ENCODE measurements at regions of chr14 and their contacts with region 1.

Region 1: DNA sequence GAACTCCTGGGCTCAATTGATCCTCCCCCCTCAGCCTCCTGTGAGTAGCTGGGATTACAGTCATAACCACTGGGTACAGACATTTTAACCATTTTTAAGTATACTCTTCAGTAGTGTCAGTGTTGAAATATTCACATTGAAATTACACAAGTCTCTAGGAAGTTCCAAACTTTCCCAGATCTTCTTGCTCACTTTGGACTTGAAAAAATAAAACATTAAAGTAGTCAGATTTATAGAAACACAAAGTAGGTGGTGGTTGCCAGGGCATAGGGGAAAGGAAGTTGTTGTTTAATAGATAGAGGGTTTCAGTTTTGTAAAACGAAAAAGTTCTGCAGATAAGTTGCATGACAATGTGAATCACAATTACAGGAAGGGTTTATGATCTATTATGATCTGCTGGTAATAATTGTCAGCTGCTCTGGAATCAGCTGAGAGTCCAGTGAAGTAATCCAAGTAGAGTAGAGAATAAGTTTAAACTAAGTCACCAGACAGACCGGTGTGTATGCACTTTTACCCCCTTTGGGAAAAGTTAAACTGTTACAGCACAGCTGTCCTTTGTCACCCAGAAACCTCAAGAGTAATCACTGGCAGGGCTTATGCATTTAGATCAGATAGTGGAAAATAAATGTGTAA is 27.4 kb downstream of the PCNX1 start:
- DNase-seq: peak in 1 of 35 experiments; percentile 33
- ATAC-seq: peak; percentile 81 to 86 (median 83)
- H3K4me3 ChIP-seq: no peak overlapping the region
- H3K4me3 Mint-ChIP-seq: peak overlapping the region; percentile 59 to 67 (median 64)
- H3K27ac ChIP-seq: peak overlapping the region; percentile 66
- H3K27ac Mint-ChIP-seq: peak overlapping the region; percentile 89 to 91
- H3K4me1 ChIP-seq: peaks cover 11% of the 10 kb centered on the region in 2 experiments
- H3K4me1 Mint-ChIP-seq: peaks cover 83 to 89% (median 84%) of the 10 kb centered on the region in 3 donors
- H3K27me3 ChIP-seq: no peaks in the 10 kb centered on the region
- H3K27me3 Mint-ChIP-seq: no peaks in the 10 kb centered on the region

Region 2: DNA sequence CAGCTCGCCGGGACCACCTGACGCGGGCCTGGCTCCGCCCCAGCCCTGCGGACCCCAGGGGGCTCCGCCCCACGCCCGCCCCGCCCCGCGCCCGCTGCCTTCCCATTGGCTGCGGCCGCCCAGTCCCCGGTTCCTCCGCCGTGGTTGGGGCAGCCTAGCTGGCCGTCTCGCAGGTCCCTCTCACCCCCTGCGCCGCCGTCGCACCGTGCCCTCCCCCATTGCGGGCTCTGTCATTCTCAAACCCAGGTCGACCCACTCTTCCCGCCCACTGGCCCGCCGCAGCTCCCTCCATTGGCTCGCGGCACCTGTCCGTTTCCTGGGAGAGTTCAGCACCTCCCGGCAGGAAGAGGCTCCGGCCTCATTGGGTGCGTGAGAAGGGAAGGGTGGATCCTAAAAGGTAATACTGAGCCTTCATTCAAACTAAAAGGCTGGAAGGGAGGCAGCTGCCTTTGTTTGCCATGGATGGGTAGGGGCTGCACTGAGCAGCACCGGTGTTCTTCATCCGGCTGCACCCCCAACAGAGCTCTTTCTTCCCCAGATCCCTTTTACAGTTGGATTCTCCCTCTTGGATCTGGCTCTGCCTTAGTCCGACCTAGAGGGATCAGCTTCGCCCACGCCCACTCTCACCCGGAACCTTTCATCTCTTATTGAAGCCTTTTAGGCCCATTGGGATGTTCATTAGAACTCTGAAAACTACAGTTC is 124.9 kb before region 1 on chr14:
- CTCF ChIA-PET with region 1: no interaction called
- POLR2A ChIA-PET with region 1: interaction called in 1 of 2 experiments, 11 read pairs
- DNase-seq: peak; percentile 67 to 91 (median 78)
- ATAC-seq: peak; percentile 83 to 88 (median 84)
- H3K4me3 ChIP-seq: peak overlapping the region; percentile 51 to 82
- H3K4me3 Mint-ChIP-seq: no peak overlapping the region
- H3K27ac ChIP-seq: peak overlapping the region; percentile 64
- H3K27ac Mint-ChIP-seq: peak overlapping the region in 1 of 2 donors; percentile 85
- H3K4me1 ChIP-seq: peaks cover 3 to 17% of the 10 kb centered on the region in 2 experiments
- H3K4me1 Mint-ChIP-seq: peaks cover 9 to 14% (median 10%) of the 10 kb centered on the region in 3 donors
- H3K27me3 ChIP-seq: peaks cover 0 to 3% of the 10 kb centered on the region in 2 experiments
- H3K27me3 Mint-ChIP-seq: peaks cover 0 to 5% of the 10 kb centered on the region in 2 donors

Region 3: GRCh38 chr14:70955543-70956480 is 21.2 kb after region 1 on chr14:
- CTCF ChIA-PET with region 1: interaction called, 3 to 10 read pairs
- POLR2A ChIA-PET with region 1: interaction called in 1 of 2 experiments, 6 read pairs
- DNase-seq: peak; percentile 18 to 76 (median 45)
- ATAC-seq: peak; percentile 72 to 94 (median 79)
- H3K4me3 ChIP-seq: no peak overlapping the region
- H3K4me3 Mint-ChIP-seq: no peak overlapping the region
- H3K27ac ChIP-seq: no peak overlapping the region
- H3K27ac Mint-ChIP-seq: peak overlapping the region; percentile 54 to 74
- H3K4me1 ChIP-seq: peaks cover 0 to 10% of the 10 kb centered on the region in 2 experiments
- H3K4me1 Mint-ChIP-seq: peaks cover 41 to 47% (median 44%) of the 10 kb centered on the region in 3 donors
- H3K27me3 ChIP-seq: no peaks in the 10 kb centered on the region
- H3K27me3 Mint-ChIP-seq: no peaks in the 10 kb centered on the region